Caco-2 (cell line): ENCODE measurements at regions of chr2 and their contacts with region 1.

Region 1: GRCh38 chr2:70977605-70978205 is 725 bp upstream of the ANKRD53 start:
- DNase-seq: no peak
- H3K4me3 ChIP-seq: no peak overlapping the region
- H3K4me3 Mint-ChIP-seq: peak overlapping the region; percentile 75
- H3K27ac Mint-ChIP-seq: no peak overlapping the region
- H3K4me1 ChIP-seq: peaks cover 10% of the 10 kb centered on the region; the same call in 1 of the 2 replicates
- H3K4me1 Mint-ChIP-seq: peaks cover 7% of the 10 kb centered on the region
- H3K27me3 ChIP-seq: no peaks in the 10 kb centered on the region
- H3K27me3 Mint-ChIP-seq: no peaks in the 10 kb centered on the region
- CTCF ChIP-seq: no peak

Region 2: GRCh38 chr2:70861777-70862625 is 115.7 kb before region 1 on chr2:
- CTCF ChIA-PET with region 1: no interaction called
- POLR2A ChIA-PET with region 1: no interaction called
- intact Hi-C with region 1: loop called (anchors 1 kb)
- DNase-seq: peak; percentile 82 to 92
- H3K4me3 ChIP-seq: no peak overlapping the region
- H3K4me3 Mint-ChIP-seq: no peak overlapping the region
- H3K27ac Mint-ChIP-seq: no peak overlapping the region
- H3K4me1 ChIP-seq: no peaks in the 10 kb centered on the region
- H3K4me1 Mint-ChIP-seq: peaks cover 6% of the 10 kb centered on the region
- H3K27me3 ChIP-seq: no peaks in the 10 kb centered on the region; the same call in none of the 2 replicates
- H3K27me3 Mint-ChIP-seq: peaks cover 29% of the 10 kb centered on the region
- CTCF ChIP-seq: peak; percentile 96 to 98

Region 3: GRCh38 chr2:70871398-70872211 is 106.1 kb before region 1 on chr2:
- CTCF ChIA-PET with region 1: no interaction called
- POLR2A ChIA-PET with region 1: no interaction called
- intact Hi-C with region 1: loop called (anchors 1 kb)
- DNase-seq: peak; percentile 86 to 93
- H3K4me3 ChIP-seq: no peak overlapping the region
- H3K4me3 Mint-ChIP-seq: peak overlapping the region; percentile 50
- H3K27ac Mint-ChIP-seq: no peak overlapping the region
- H3K4me1 ChIP-seq: 0 out of 2 replicates have a peak, but pooled peaks cover 8% of the 10 kb centered on the region
- H3K4me1 Mint-ChIP-seq: no peaks in the 10 kb centered on the region
- H3K27me3 ChIP-seq: no peaks in the 10 kb centered on the region; the same call in 1 of the 2 replicates
- H3K27me3 Mint-ChIP-seq: peaks cover 6% of the 10 kb centered on the region
- CTCF ChIP-seq: peak; percentile 97 to 98